CD8-positive, alpha-beta T cell (primary cell): ENCODE measurements at regions of chr7 and their contacts with region 1.

Region 1: GRCh38 chr7:117468174-117468573 is 11.7 kb upstream of the CFTR start:
- DNase-seq: no peak
- ATAC-seq: no peak
- H3K4me3 ChIP-seq: no peak overlapping the region
- H3K4me3 Mint-ChIP-seq: no peak overlapping the region
- H3K27ac ChIP-seq: no peak overlapping the region
- H3K27ac Mint-ChIP-seq: no peak overlapping the region
- H3K4me1 ChIP-seq: no peaks in the 10 kb centered on the region
- H3K4me1 Mint-ChIP-seq: no peaks in the 10 kb centered on the region
- H3K27me3 ChIP-seq: no peaks in the 10 kb centered on the region
- H3K27me3 Mint-ChIP-seq: no peaks in the 10 kb centered on the region
- CTCF ChIP-seq: no peak

Region 2: GRCh38 chr7:117479225-117480054 is 11.3 kb after region 1 on chr7 and contains the start of gene CFTR:
- CTCF ChIA-PET with region 1: no interaction called
- POLR2A ChIA-PET with region 1: no interaction called
- intact Hi-C with region 1: no loop called
- DNase-seq: peak in 1 of 9 experiments; percentile 1
- ATAC-seq: no peak
- H3K4me3 ChIP-seq: no peak within 1 kb of the TSS
- H3K4me3 Mint-ChIP-seq: no peak within 1 kb of the TSS
- H3K27ac ChIP-seq: no peak within 1 kb of the TSS
- H3K27ac Mint-ChIP-seq: no peak within 1 kb of the TSS
- H3K4me1 ChIP-seq: no peaks in the 10 kb centered on the region
- H3K4me1 Mint-ChIP-seq: peaks cover 2% of the 10 kb centered on the region
- H3K27me3 ChIP-seq: peaks cover 0 to 3% of the 10 kb centered on the region in 2 experiments
- H3K27me3 Mint-ChIP-seq: peaks cover 21% of the 10 kb centered on the region
- CTCF ChIP-seq: no peak
- total RNA-seq, gene CFTR: not detected

Region 3: GRCh38 chr7:119123332-119123731 is 1655.2 kb after region 1 on chr7:
- CTCF ChIA-PET with region 1: no interaction called
- POLR2A ChIA-PET with region 1: no interaction called
- intact Hi-C with region 1: loop called in 1 of 2 experiments (anchors 5 kb)
- DNase-seq: no peak
- ATAC-seq: no peak
- H3K4me3 ChIP-seq: no peak overlapping the region
- H3K4me3 Mint-ChIP-seq: no peak overlapping the region
- H3K27ac ChIP-seq: no peak overlapping the region
- H3K27ac Mint-ChIP-seq: no peak overlapping the region
- H3K4me1 ChIP-seq: no peaks in the 10 kb centered on the region
- H3K4me1 Mint-ChIP-seq: no peaks in the 10 kb centered on the region
- H3K27me3 ChIP-seq: no peaks in the 10 kb centered on the region
- H3K27me3 Mint-ChIP-seq: no peaks in the 10 kb centered on the region
- CTCF ChIP-seq: no peak